A673 (cell line): ENCODE measurements at regions of chr11 and their contacts with region 1.

Region 1: GRCh38 chr11:96149743-96150555 is 193.0 kb downstream of the MAML2 start:
- DNase-seq: peak; percentile 76
- H3K4me3 ChIP-seq: no peak overlapping the region
- H3K27ac ChIP-seq: no peak overlapping the region
- H3K4me1 ChIP-seq: peaks cover 50% of the 10 kb centered on the region
- H3K27me3 ChIP-seq: no peaks in the 10 kb centered on the region
- CTCF ChIP-seq: no peak

Region 2: GRCh38 chr11:95055283-95055897 is 1094.6 kb before region 1 on chr11:
- CTCF ChIA-PET with region 1: no interaction called
- POLR2A ChIA-PET with region 1: interaction called, 11 read pairs
- intact Hi-C with region 1: no loop called
- DNase-seq: no peak
- H3K4me3 ChIP-seq: no peak overlapping the region
- H3K27ac ChIP-seq: no peak overlapping the region
- H3K4me1 ChIP-seq: no peaks in the 10 kb centered on the region
- H3K27me3 ChIP-seq: no peaks in the 10 kb centered on the region
- CTCF ChIP-seq: no peak

Region 3: GRCh38 chr11:95977534-95978174 is 172.3 kb before region 1 on chr11:
- CTCF ChIA-PET with region 1: no interaction called
- POLR2A ChIA-PET with region 1: no interaction called
- intact Hi-C with region 1: no loop called
- DNase-seq: no peak
- H3K4me3 ChIP-seq: no peak overlapping the region
- H3K27ac ChIP-seq: no peak overlapping the region
- H3K4me1 ChIP-seq: no peaks in the 10 kb centered on the region
- H3K27me3 ChIP-seq: no peaks in the 10 kb centered on the region
- CTCF ChIP-seq: no peak

Region 4: DNA sequence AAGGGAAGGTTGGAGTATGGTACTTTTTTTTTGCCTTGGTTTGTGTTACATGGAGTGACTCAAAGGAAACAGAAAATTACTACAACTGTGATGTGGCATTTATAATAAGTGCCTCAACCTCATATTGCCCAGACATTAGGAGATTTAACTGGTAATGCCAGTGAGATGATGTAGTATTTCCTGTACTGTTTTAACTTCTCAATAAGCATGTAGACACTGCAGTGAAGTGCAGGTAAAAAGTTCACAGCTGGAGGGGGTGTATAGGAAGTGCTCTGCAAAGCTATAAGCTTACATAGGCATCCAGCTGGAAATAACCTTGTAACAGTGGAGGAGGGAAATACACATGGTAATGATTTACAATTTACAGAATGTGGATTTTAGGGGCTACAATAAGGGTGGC is 87.8 kb before region 1 on chr11:
- CTCF ChIA-PET with region 1: no interaction called
- POLR2A ChIA-PET with region 1: no interaction called
- intact Hi-C with region 1: loop called (anchors 2 kb)
- DNase-seq: peak; percentile 93
- H3K4me3 ChIP-seq: no peak overlapping the region
- H3K27ac ChIP-seq: no peak overlapping the region
- H3K4me1 ChIP-seq: peaks cover 30% of the 10 kb centered on the region
- H3K27me3 ChIP-seq: no peaks in the 10 kb centered on the region
- CTCF ChIP-seq: no peak